IMR-90 (cell line): ENCODE measurements at regions of chr1 and their contacts with region 1.

Region 1: GRCh38 chr1:64163970-64164369 is 39.5 kb upstream of the UBE2U start:
- DNase-seq: peak; percentile 64
- ATAC-seq: peak; percentile 73
- H3K4me3 ChIP-seq: no peak overlapping the region
- H3K27ac ChIP-seq: no peak overlapping the region
- H3K4me1 ChIP-seq: peaks cover 2% of the 10 kb centered on the region
- H3K27me3 ChIP-seq: no peaks in the 10 kb centered on the region
- CTCF ChIP-seq: peak; percentile 70
- POLR2A ChIP-seq: no peak
- RAD21 ChIP-seq: peak; percentile 66

Region 2: GRCh38 chr1:63615768-63616420 is 548.1 kb before region 1 on chr1:
- CTCF ChIA-PET with region 1: no interaction called
- POLR2A ChIA-PET with region 1: no interaction called
- dilution Hi-C with region 1: no loop called
- in situ Hi-C with region 1: no loop called
- intact Hi-C with region 1: loop called (anchors 5 kb)
- DNase-seq: peak; percentile 75
- ATAC-seq: peak; percentile 78
- H3K4me3 ChIP-seq: no peak overlapping the region
- H3K27ac ChIP-seq: no peak overlapping the region
- H3K4me1 ChIP-seq: peaks cover 11% of the 10 kb centered on the region
- H3K27me3 ChIP-seq: no peaks in the 10 kb centered on the region
- CTCF ChIP-seq: peak; percentile 81
- POLR2A ChIP-seq: no peak
- RAD21 ChIP-seq: peak; percentile 85

Region 3: GRCh38 chr1:63691701-63692425 is 472.1 kb before region 1 on chr1:
- CTCF ChIA-PET with region 1: no interaction called
- POLR2A ChIA-PET with region 1: no interaction called
- dilution Hi-C with region 1: no loop called
- in situ Hi-C with region 1: no loop called
- intact Hi-C with region 1: loop called (anchors 5 kb)
- DNase-seq: peak; percentile 94
- ATAC-seq: peak; percentile 89
- H3K4me3 ChIP-seq: no peak overlapping the region
- H3K27ac ChIP-seq: no peak overlapping the region
- H3K4me1 ChIP-seq: peaks cover 2% of the 10 kb centered on the region; the same call in 1 of the 2 replicates
- H3K27me3 ChIP-seq: no peaks in the 10 kb centered on the region; the same call in 1 of the 2 replicates
- CTCF ChIP-seq: peak; percentile 84
- POLR2A ChIP-seq: no peak
- RAD21 ChIP-seq: peak; percentile 87

Region 4: GRCh38 chr1:63868268-63868781 is 295.6 kb before region 1 on chr1:
- CTCF ChIA-PET with region 1: no interaction called
- POLR2A ChIA-PET with region 1: interaction called, 22 read pairs
- dilution Hi-C with region 1: no loop called
- in situ Hi-C with region 1: no loop called
- intact Hi-C with region 1: no loop called
- DNase-seq: peak; percentile 55
- ATAC-seq: no peak; the same call in 1 of the 2 replicates
- H3K4me3 ChIP-seq: no peak overlapping the region
- H3K27ac ChIP-seq: no peak overlapping the region
- H3K4me1 ChIP-seq: no peaks in the 10 kb centered on the region; the same call in 1 of the 2 replicates
- H3K27me3 ChIP-seq: no peaks in the 10 kb centered on the region; the same call in 1 of the 2 replicates
- CTCF ChIP-seq: no peak
- POLR2A ChIP-seq: no peak
- RAD21 ChIP-seq: no peak

Region 5: DNA sequence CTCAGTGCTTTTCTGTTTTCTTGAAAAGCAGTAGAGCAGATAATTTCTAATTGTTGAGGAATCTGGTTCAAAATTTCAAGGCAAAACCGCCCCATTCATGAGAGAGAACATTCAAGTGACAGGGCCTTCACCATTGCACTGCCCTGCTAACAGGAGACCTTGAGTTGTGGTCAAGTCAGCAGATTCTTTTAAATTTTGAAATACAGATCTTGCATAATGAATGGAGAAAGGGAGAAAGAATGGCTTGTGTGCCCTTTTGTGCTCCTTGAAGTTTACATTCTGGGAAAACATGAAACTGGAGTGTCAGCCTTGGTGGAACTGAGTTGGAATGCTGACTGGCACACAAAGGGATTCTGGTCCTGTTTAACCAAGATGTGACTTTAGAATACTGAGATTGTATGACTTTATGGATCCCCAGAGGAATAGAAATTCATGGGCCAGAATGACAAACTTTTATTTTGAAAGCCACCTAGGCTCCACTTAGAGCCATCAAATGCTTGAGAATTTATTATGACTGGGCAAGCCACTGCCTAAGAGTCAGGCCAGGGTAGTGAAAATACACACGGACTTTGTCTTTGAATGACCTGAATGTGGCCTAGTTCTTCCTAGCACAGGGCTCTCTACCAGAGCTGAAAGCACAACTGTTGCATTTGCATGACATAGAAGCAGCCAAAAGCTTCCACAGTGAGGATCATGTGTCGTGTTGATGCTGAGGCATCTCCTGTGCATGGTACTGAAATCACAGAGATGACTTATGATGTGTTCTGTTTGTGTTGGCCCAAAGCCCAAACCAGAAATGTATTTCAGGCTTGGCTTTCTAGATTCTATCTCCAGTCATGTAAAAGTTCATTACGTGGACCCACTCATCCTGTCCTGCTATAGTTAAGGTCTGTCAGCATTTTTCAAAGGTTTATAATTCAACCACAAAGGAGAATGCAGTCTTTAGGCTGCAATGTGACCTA is 124.7 kb before region 1 on chr1:
- CTCF ChIA-PET with region 1: no interaction called
- POLR2A ChIA-PET with region 1: no interaction called
- dilution Hi-C with region 1: no loop called
- in situ Hi-C with region 1: no loop called
- intact Hi-C with region 1: no loop called
- DNase-seq: peak; percentile 100
- ATAC-seq: peak; percentile 84
- H3K4me3 ChIP-seq: no peak overlapping the region
- H3K27ac ChIP-seq: peak overlapping the region; percentile 51; the same call in 1 of the 2 replicates
- H3K4me1 ChIP-seq: peaks cover 22% of the 10 kb centered on the region
- H3K27me3 ChIP-seq: no peaks in the 10 kb centered on the region
- CTCF ChIP-seq: no peak
- POLR2A ChIP-seq: no peak
- RAD21 ChIP-seq: no peak; the same call in 1 of the 2 replicates

Region 6: GRCh38 chr1:64268653-64269557 is 104.9 kb after region 1 on chr1:
- CTCF ChIA-PET with region 1: no interaction called
- POLR2A ChIA-PET with region 1: no interaction called
- dilution Hi-C with region 1: no loop called
- in situ Hi-C with region 1: no loop called
- intact Hi-C with region 1: no loop called
- DNase-seq: peak; percentile 85
- ATAC-seq: peak; percentile 96
- H3K4me3 ChIP-seq: no peak overlapping the region
- H3K27ac ChIP-seq: no peak overlapping the region
- H3K4me1 ChIP-seq: no peaks in the 10 kb centered on the region
- H3K27me3 ChIP-seq: peaks cover 9% of the 10 kb centered on the region
- CTCF ChIP-seq: peak; percentile 91
- POLR2A ChIP-seq: no peak
- RAD21 ChIP-seq: peak; percentile 91